ENCODE measurements at regions of chr16 and their contacts with region 1.

Region 1: GRCh38 chr16:50326949-50327402 is 41.8 kb downstream of the BRD7 start:
- DNase-seq: peak in 1 of 2 experiments; percentile 58
- H3K4me3 ChIP-seq: no peak overlapping the region
- H3K27ac ChIP-seq: no peak overlapping the region
- H3K4me1 ChIP-seq: no peaks in the 10 kb centered on the region
- H3K27me3 ChIP-seq: no peaks in the 10 kb centered on the region
- CTCF ChIP-seq: peak; percentile 43 to 72 (median 69)
- EP300 ChIP-seq: no peak
- POLR2A ChIP-seq: no peak
- RAD21 ChIP-seq: peak; percentile 59 to 66

Region 2: GRCh38 chr16:50245417-50246298 is 81.3 kb before region 1 on chr16:
- CTCF ChIA-PET with region 1: no interaction called
- POLR2A ChIA-PET with region 1: no interaction called
- DNase-seq: no peak
- H3K4me3 ChIP-seq: peak overlapping the region; percentile 43 to 72 (median 48)
- H3K27ac ChIP-seq: no peak overlapping the region
- H3K4me1 ChIP-seq: peaks cover 0 to 22% (median 6%) of the 10 kb centered on the region in 4 experiments; a peak in 5 of 7 replicates
- H3K27me3 ChIP-seq: peaks cover 0 to 24% (median 14%) of the 10 kb centered on the region in 4 experiments; a peak in 6 of 7 replicates
- CTCF ChIP-seq: no peak
- EP300 ChIP-seq: no peak
- POLR2A ChIP-seq: no peak
- RAD21 ChIP-seq: no peak

Region 3: DNA sequence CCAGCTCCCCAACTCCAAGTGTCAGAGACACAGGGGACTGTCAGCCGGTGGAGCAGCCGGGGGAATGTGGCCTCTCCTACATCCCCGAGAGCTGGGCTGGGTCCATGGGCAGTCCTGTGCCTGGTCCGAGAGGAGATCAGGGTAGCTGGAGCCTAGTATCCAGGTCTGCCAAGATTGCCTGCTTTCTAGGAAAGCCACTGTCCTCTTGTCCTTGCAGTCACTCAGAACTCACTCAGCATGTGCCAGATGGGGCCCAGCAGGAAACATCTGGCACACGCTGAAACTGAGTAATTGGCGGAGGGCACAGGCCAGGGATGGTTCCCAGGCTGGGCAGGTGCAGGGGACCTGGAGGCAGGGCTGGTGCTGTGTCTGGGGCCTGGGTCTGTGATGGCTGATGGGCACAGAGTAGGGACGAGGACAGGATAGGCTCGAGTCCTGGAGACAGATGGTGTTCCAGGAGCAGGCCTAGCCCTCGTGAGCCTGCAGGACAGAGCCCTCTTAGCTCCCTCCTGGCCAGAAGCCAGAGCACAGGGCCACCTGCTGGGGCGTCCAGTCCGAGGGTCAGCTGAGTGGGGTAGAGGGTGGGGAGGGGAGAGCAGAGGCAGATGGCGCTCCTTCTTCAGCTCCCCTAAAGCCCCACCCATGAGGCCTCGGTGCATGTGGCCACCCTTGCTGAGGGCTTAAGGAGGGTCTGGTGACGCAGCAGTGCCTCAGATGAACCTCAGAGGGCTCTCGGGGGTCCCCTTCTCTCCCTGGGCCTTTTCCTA is 29.5 kb before region 1 on chr16:
- CTCF ChIA-PET with region 1: interaction called, 11 read pairs
- POLR2A ChIA-PET with region 1: no interaction called
- DNase-seq: no peak
- H3K4me3 ChIP-seq: no peak overlapping the region
- H3K27ac ChIP-seq: no peak overlapping the region
- H3K4me1 ChIP-seq: peaks cover 0 to 3% (median 0%) of the 10 kb centered on the region in 4 experiments; a peak in 1 of 7 replicates
- H3K27me3 ChIP-seq: no peaks in the 10 kb centered on the region
- CTCF ChIP-seq: no peak
- EP300 ChIP-seq: no peak
- POLR2A ChIP-seq: no peak
- RAD21 ChIP-seq: no peak

Region 4: GRCh38 chr16:50313596-50314478 is 13.1 kb before region 1 on chr16:
- CTCF ChIA-PET with region 1: interaction called, 38 read pairs
- POLR2A ChIA-PET with region 1: interaction called, 3 read pairs
- DNase-seq: peak in 1 of 2 experiments; percentile 41
- H3K4me3 ChIP-seq: no peak overlapping the region
- H3K27ac ChIP-seq: no peak overlapping the region
- H3K4me1 ChIP-seq: no peaks in the 10 kb centered on the region; a peak in 1 of 7 replicates
- H3K27me3 ChIP-seq: no peaks in the 10 kb centered on the region
- CTCF ChIP-seq: no peak
- EP300 ChIP-seq: no peak
- POLR2A ChIP-seq: 0 out of 3 replicates have a peak, but pooled peaks of 1 of the 2 experiments have one; percentile 37
- RAD21 ChIP-seq: no peak

Region 5: DNA sequence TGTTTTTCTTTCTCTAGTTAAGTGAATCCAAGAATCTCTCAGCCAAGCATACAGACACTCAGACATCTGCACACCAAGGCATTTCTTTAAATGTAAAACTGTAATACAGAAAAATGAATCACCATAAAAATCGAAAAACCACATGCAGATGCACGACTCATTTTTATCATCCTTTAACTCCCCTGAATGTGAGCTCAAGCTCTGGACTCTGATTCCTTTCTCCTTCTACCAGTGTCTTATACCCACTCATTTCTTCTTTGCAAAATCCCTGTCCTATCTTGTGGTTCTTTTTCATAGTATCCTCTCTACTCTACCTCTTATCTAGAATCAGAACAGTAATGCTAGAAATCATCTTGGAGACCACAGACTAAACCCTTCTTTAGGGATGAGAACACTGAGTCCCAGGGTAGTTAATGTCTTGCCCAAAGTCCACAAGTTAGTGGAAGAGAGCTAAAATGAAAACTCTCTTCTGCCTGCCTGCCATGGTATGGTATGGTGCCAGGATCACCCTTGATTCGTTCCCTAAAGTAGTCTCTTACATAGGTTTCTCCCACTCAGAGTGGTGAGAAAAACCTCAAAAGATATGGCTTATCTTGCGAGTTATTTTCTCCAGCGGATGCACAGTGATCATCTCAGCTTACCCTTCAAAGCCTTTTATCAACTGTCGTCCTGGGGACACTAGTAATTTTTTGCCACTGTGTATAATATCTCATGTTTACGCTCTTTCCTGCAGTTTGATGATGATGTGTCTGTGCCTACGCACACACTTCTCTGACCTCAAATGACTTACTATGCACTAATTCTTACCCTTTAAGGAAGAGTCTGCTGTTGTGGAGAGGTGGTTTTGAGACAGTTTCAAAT is 11.6 kb after region 1 on chr16:
- CTCF ChIA-PET with region 1: interaction called, 16 read pairs
- POLR2A ChIA-PET with region 1: interaction called, 4 read pairs
- DNase-seq: no peak
- H3K4me3 ChIP-seq: no peak overlapping the region
- H3K27ac ChIP-seq: no peak overlapping the region
- H3K4me1 ChIP-seq: no peaks in the 10 kb centered on the region
- H3K27me3 ChIP-seq: no peaks in the 10 kb centered on the region
- CTCF ChIP-seq: no peak
- EP300 ChIP-seq: no peak
- POLR2A ChIP-seq: no peak
- RAD21 ChIP-seq: no peak

Region 6: GRCh38 chr16:50354629-50355456 is 27.9 kb after region 1 on chr16:
- CTCF ChIA-PET with region 1: interaction called, 92 read pairs
- POLR2A ChIA-PET with region 1: interaction called, 5 read pairs
- DNase-seq: no peak
- H3K4me3 ChIP-seq: no peak overlapping the region
- H3K27ac ChIP-seq: no peak overlapping the region
- H3K4me1 ChIP-seq: no peaks in the 10 kb centered on the region
- H3K27me3 ChIP-seq: no peaks in the 10 kb centered on the region
- CTCF ChIP-seq: peak in 1 of 3 experiments; percentile 22; a peak in 2 of 4 replicates
- EP300 ChIP-seq: no peak
- POLR2A ChIP-seq: no peak
- RAD21 ChIP-seq: peak in 1 of 2 experiments; percentile 34; a peak in 3 of 4 replicates

Measured in H1 (cell line).